ENCODE measurements at regions of chr6 and their contacts with region 1.

Region 1: DNA sequence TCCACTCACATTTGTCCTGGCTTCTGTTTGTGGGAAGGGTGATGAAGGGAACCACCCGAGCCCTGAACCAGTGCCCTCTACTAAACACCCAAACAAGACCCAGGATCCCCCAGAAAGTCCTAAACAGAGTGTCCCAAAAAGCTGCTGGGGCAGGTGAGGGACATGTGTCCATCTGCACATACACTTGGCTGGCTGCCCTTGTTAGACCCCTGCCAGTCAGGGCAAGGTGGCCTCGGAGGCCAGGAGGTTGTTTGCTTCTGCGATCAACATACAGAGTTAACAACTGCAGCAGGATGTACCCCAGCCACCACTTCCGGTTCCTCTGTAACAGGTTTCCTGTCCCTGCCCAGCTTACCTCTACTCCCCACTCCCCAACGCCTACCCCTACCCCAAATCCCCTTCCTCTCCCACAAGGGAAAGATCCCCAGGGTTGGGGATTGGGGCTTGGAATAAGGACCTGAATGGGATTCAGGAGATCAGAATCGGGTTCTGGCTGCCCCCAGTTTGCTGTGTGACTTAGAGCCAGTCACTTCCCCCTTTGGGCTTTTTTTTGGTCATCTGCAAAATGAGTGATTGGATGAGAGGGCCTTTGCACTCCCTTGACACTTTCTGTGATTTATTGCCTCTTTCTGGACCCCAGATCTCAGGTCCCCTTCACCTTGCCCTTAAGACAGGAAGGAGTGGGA is 13.9 kb downstream of the DEF6 start:
- DNase-seq: peak; percentile 55 to 92 (median 86)
- H3K4me3 ChIP-seq: peak overlapping the region in 5 of 7 experiments; percentile 8 to 59 (median 33)
- H3K27ac ChIP-seq: peak overlapping the region; percentile 55 to 78
- H3K4me1 ChIP-seq: peaks cover 20 to 52% (median 40%) of the 10 kb centered on the region in 4 experiments
- H3K27me3 ChIP-seq: no peaks in the 10 kb centered on the region

Region 2: GRCh38 chr6:35327349-35328027 is 16.0 kb after region 1 on chr6:
- CTCF ChIA-PET with region 1: interaction called, 13 read pairs
- POLR2A ChIA-PET with region 1: no interaction called
- DNase-seq: peak; percentile 75 to 84 (median 82)
- H3K4me3 ChIP-seq: no peak overlapping the region
- H3K27ac ChIP-seq: peak overlapping the region in 1 of 2 experiments; percentile 12
- H3K4me1 ChIP-seq: peaks cover 0 to 10% (median 9%) of the 10 kb centered on the region in 4 experiments
- H3K27me3 ChIP-seq: no peaks in the 10 kb centered on the region